PC-9 (cell line): ENCODE measurements at regions of chr1 and their contacts with region 1.

Region 1: DNA sequence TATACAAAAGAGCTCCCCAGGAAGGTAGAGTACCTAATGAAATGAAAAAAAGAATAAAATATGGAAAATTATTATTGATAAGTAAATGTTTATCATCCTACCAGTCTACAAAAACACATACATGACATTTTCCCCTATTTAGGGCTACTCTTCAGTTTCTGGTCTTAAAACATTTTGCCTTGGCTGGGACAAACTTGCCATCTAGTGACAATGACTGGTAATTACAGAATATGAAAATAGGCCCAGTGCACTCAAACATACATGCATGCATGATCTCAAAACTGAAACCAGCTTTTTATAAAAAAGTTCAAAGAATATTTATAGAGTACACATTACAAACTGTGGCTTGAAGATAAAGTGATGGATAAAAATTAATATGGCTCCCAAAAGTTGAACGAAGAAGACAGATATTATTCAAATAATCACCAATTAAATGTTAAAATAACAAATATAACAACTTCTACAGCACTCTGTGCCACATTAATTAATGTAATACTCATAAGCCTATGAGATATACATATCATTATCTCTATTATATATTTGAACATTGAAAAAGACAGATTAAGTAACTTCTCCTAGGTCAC is 10.5 kb upstream of the RNPC3 start:
- DNase-seq: peak in 1 of 2 experiments; percentile 1
- H3K4me3 ChIP-seq: no peak overlapping the region
- H3K27ac ChIP-seq: no peak overlapping the region
- H3K4me1 ChIP-seq: no peaks in the 10 kb centered on the region
- H3K27me3 ChIP-seq: no peaks in the 10 kb centered on the region
- CTCF ChIP-seq: peak; percentile 93

Region 2: GRCh38 chr1:101520302-101520701 is 1994.7 kb before region 1 on chr1:
- CTCF ChIA-PET with region 1: interaction called, 3 read pairs
- POLR2A ChIA-PET with region 1: no interaction called
- intact Hi-C with region 1: loop called (anchors 5 kb)
- DNase-seq: peak; percentile 2 to 43
- H3K4me3 ChIP-seq: no peak overlapping the region
- H3K27ac ChIP-seq: no peak overlapping the region
- H3K4me1 ChIP-seq: no peaks in the 10 kb centered on the region
- H3K27me3 ChIP-seq: no peaks in the 10 kb centered on the region
- CTCF ChIP-seq: peak; percentile 94

Region 3: GRCh38 chr1:101653482-101653946 is 1861.5 kb before region 1 on chr1:
- CTCF ChIA-PET with region 1: no interaction called
- POLR2A ChIA-PET with region 1: no interaction called
- intact Hi-C with region 1: loop called (anchors 10 kb)
- DNase-seq: no peak
- H3K4me3 ChIP-seq: no peak overlapping the region
- H3K27ac ChIP-seq: no peak overlapping the region
- H3K4me1 ChIP-seq: no peaks in the 10 kb centered on the region
- H3K27me3 ChIP-seq: no peaks in the 10 kb centered on the region
- CTCF ChIP-seq: peak; percentile 64

Region 4: GRCh38 chr1:101820071-101820470 is 1694.9 kb before region 1 on chr1:
- CTCF ChIA-PET with region 1: no interaction called
- POLR2A ChIA-PET with region 1: no interaction called
- intact Hi-C with region 1: loop called (anchors 10 kb)
- DNase-seq: no peak
- H3K4me3 ChIP-seq: no peak overlapping the region
- H3K27ac ChIP-seq: no peak overlapping the region
- H3K4me1 ChIP-seq: no peaks in the 10 kb centered on the region
- H3K27me3 ChIP-seq: no peaks in the 10 kb centered on the region
- CTCF ChIP-seq: peak; percentile 66

Region 5: DNA sequence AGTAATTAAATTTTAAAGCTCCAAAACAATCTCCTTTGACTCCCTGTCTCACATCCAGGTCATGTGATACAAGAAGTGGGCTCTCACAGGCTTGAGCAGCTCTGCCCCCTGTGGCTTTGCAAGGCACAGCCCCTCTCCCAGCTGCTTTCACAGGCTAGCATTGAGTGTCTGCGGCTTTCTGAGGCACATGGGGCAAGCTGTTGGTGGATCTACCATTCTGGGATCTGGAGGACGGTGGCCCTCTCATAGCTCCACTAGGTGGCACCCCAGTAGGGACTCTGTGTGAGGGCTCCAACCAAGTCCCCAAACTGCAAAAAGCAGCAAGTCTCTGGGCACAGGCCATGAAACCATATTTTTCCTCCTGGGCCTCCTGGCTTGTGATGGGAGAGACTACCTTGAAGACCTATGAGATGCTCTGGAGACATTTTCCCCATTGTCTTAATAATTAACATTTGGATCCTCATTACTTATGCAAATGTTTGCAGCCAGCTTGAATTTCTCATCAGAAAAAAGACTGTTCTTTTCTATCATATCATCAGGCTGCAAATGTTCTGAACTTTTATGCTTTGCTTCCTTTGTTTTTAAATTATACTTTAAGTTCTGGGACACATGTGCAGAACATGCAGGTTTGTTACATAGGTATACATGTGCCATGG is 964.2 kb before region 1 on chr1:
- CTCF ChIA-PET with region 1: no interaction called
- POLR2A ChIA-PET with region 1: no interaction called
- intact Hi-C with region 1: loop called (anchors 2 kb)
- DNase-seq: peak in 1 of 2 experiments; percentile 18
- H3K4me3 ChIP-seq: no peak overlapping the region
- H3K27ac ChIP-seq: no peak overlapping the region
- H3K4me1 ChIP-seq: no peaks in the 10 kb centered on the region
- H3K27me3 ChIP-seq: no peaks in the 10 kb centered on the region
- CTCF ChIP-seq: peak; percentile 71

Region 6: GRCh38 chr1:103489935-103490334 is 25.1 kb before region 1 on chr1:
- CTCF ChIA-PET with region 1: no interaction called
- POLR2A ChIA-PET with region 1: no interaction called
- intact Hi-C with region 1: no loop called
- DNase-seq: peak in 1 of 2 experiments; percentile 35
- H3K4me3 ChIP-seq: no peak overlapping the region
- H3K27ac ChIP-seq: no peak overlapping the region
- H3K4me1 ChIP-seq: no peaks in the 10 kb centered on the region
- H3K27me3 ChIP-seq: no peaks in the 10 kb centered on the region
- CTCF ChIP-seq: no peak